Common myeloid progenitor, CD34-positive (primary cell): ENCODE measurements at regions of chr11 and their contacts with region 1.

Region 1: GRCh38 chr11:117098269-117099232 is at the start of gene SIK3:
- DNase-seq: peak; percentile 91 to 93 (median 93)
- H3K4me3 ChIP-seq: peak within 1 kb of the TSS; percentile 70 to 96 (median 90)
- H3K27ac ChIP-seq: peak within 1 kb of the TSS; percentile 92 to 97
- H3K4me1 ChIP-seq: peaks cover 22 to 44% (median 39%) of the 10 kb centered on the region in 4 experiments
- H3K27me3 ChIP-seq: no peaks in the 10 kb centered on the region

Region 2: GRCh38 chr11:116096272-116096995 is 1002.1 kb before region 1 on chr11:
- CTCF ChIA-PET with region 1: no interaction called
- POLR2A ChIA-PET with region 1: no interaction called
- DNase-seq: no peak
- H3K4me3 ChIP-seq: no peak overlapping the region
- H3K27ac ChIP-seq: no peak overlapping the region
- H3K4me1 ChIP-seq: no peaks in the 10 kb centered on the region
- H3K27me3 ChIP-seq: peaks cover 0 to 23% (median 2%) of the 10 kb centered on the region in 5 experiments

Region 3: GRCh38 chr11:116879800-116880625 is 218.5 kb before region 1 on chr11:
- CTCF ChIA-PET with region 1: interaction called, 17 read pairs
- POLR2A ChIA-PET with region 1: interaction called, 4 read pairs
- DNase-seq: peak; percentile 72 to 83 (median 80)
- H3K4me3 ChIP-seq: no peak overlapping the region
- H3K27ac ChIP-seq: no peak overlapping the region
- H3K4me1 ChIP-seq: peaks cover 0 to 19% (median 5%) of the 10 kb centered on the region in 4 experiments
- H3K27me3 ChIP-seq: no peaks in the 10 kb centered on the region

Region 4: GRCh38 chr11:116895048-116895757 is 203.3 kb before region 1 on chr11:
- CTCF ChIA-PET with region 1: interaction called, 10 read pairs
- POLR2A ChIA-PET with region 1: no interaction called
- DNase-seq: peak; percentile 53 to 72 (median 59)
- H3K4me3 ChIP-seq: peak overlapping the region in 1 of 7 experiments; percentile 14
- H3K27ac ChIP-seq: peak overlapping the region in 1 of 2 experiments; percentile 43
- H3K4me1 ChIP-seq: peaks cover 3 to 17% (median 11%) of the 10 kb centered on the region in 4 experiments
- H3K27me3 ChIP-seq: no peaks in the 10 kb centered on the region

Region 5: DNA sequence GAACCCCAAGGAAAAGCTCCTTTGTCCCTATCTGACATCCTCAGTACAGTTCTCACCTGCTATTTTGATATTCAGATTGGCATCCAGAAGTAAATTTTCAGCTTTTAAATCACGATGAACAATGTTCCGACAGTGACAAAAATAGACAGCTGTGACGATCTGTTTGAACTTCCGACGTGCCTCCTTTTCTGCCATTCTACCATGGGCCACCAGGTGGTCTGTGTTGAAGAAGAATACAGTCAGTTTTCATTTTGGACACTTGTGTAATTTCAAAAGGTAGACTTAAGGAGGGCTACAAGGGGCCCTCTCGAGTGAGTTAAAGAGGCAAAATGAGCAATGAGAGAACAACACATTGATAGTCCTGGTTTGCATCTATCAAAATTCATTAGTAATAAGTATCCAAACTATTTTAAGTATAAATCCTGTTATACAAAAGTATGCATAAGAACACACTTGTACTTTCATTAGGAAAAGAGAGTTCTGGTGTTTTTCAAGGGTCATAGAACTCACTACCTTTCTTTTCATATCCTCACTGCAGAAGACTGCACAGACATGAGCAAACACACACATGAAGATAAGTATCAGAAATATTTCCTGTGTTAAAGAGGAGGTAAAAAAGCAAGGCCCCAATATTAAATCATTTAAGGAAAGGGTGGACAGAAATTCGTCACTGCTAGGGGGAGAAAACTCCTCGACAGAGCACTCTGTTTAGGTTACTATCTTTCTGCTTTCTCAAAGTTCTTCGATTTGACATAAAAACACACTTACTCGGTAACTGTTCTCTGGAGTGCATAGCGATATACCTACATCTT is 171.2 kb before region 1 on chr11:
- CTCF ChIA-PET with region 1: interaction called, 14 read pairs
- POLR2A ChIA-PET with region 1: interaction called, 4 read pairs
- DNase-seq: peak; percentile 62 to 82 (median 78)
- H3K4me3 ChIP-seq: peak overlapping the region in 3 of 7 experiments; percentile 1 to 42 (median 41)
- H3K27ac ChIP-seq: peak overlapping the region; percentile 10 to 97
- H3K4me1 ChIP-seq: peaks cover 51 to 69% (median 62%) of the 10 kb centered on the region in 4 experiments
- H3K27me3 ChIP-seq: no peaks in the 10 kb centered on the region

Region 6: GRCh38 chr11:117083011-117083935 is 15.3 kb before region 1 on chr11:
- CTCF ChIA-PET with region 1: interaction called, 11 read pairs
- POLR2A ChIA-PET with region 1: no interaction called
- DNase-seq: peak in 1 of 3 donors; percentile 23
- H3K4me3 ChIP-seq: peak overlapping the region in 1 of 7 experiments; percentile 31
- H3K27ac ChIP-seq: no peak overlapping the region
- H3K4me1 ChIP-seq: peaks cover under 1 to 32% (median 3%) of the 10 kb centered on the region in 4 experiments
- H3K27me3 ChIP-seq: no peaks in the 10 kb centered on the region

Region 7: DNA sequence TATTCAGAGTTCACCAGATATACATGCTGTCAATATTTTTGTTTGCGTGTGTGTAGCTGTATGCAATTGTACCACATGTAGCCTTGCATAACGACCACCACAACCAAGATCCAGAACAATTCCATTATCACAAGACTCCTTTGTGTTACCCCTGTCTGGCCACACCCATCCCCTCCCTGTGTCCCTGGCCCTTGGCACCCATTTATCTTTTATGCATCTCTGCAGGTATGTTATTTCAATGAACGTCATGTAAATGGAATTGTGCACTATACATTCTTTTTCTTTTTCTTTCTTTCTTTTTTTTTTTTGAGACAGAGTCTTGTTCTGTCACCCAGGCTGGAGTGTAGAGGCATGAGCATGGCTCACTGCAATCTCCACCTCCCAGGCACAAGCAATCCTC is 35.9 kb after region 1 on chr11:
- CTCF ChIA-PET with region 1: no interaction called
- POLR2A ChIA-PET with region 1: no interaction called
- DNase-seq: no peak
- H3K4me3 ChIP-seq: no peak overlapping the region
- H3K27ac ChIP-seq: no peak overlapping the region
- H3K4me1 ChIP-seq: no peaks in the 10 kb centered on the region
- H3K27me3 ChIP-seq: peaks cover 0 to 2% (median 0%) of the 10 kb centered on the region in 5 experiments

Region 8: DNA sequence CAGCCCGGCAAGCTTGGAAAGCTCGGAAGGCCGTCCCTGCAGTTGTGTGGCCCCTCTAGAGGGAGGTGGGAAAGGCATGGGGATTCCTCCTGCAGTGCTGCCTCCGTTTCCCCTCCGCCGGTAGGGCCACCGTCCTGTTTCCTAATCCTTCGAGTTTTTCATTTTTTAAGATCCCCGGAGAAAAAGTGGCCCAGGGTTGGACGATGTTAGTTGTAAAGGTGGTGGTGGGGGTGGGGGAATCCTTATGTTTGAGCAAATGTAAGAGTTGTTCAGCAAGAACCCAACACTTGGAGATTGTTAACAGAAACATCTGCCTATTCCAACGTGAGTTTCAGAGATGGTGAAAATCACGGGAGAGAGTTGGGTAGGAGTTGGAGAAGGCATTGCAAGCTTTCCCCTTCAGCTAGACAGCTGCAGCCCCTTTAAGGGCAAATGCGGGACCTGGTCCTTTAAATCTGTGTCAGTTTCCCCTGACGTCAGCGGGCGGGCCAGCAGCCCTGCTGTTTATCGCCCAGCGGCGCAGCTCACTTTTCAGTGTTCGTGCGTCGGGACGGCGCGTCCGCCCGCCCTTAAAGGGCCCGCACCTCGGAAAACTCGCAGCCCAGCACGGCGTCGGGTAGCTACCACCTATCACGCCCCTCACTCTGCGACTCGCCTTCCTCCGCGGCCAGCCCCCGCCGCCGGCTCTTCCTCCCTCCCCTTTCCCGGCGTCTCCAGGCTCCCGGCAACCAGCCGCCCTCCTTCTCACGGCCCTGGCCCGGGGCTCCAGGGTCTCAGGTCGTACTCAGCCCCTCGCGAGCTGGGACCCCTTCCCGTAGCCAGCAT is 79.9 kb after region 1 on chr11 and contains the start of gene SIDT2:
- CTCF ChIA-PET with region 1: no interaction called
- POLR2A ChIA-PET with region 1: no interaction called
- DNase-seq: peak; percentile 86 to 95 (median 92)
- H3K4me3 ChIP-seq: peak within 1 kb of the TSS; percentile 46 to 82 (median 77)
- H3K27ac ChIP-seq: peak within 1 kb of the TSS in 1 of 2 experiments; percentile 70
- H3K4me1 ChIP-seq: peaks cover 8 to 31% (median 27%) of the 10 kb centered on the region in 4 experiments
- H3K27me3 ChIP-seq: no peaks in the 10 kb centered on the region

Region 9: GRCh38 chr11:117327567-117328374 is 229.2 kb after region 1 on chr11 and contains the start of gene CEP164:
- CTCF ChIA-PET with region 1: no interaction called
- POLR2A ChIA-PET with region 1: no interaction called
- DNase-seq: peak; percentile 95 to 98 (median 97)
- H3K4me3 ChIP-seq: peak within 1 kb of the TSS; percentile 69 to 89 (median 81)
- H3K27ac ChIP-seq: peak within 1 kb of the TSS; percentile 66 to 79
- H3K4me1 ChIP-seq: peaks cover 0 to 12% (median 6%) of the 10 kb centered on the region in 4 experiments
- H3K27me3 ChIP-seq: no peaks in the 10 kb centered on the region